PC-3 (cell line): ENCODE measurements at regions of chr1 and their contacts with region 1.

Region 1: DNA sequence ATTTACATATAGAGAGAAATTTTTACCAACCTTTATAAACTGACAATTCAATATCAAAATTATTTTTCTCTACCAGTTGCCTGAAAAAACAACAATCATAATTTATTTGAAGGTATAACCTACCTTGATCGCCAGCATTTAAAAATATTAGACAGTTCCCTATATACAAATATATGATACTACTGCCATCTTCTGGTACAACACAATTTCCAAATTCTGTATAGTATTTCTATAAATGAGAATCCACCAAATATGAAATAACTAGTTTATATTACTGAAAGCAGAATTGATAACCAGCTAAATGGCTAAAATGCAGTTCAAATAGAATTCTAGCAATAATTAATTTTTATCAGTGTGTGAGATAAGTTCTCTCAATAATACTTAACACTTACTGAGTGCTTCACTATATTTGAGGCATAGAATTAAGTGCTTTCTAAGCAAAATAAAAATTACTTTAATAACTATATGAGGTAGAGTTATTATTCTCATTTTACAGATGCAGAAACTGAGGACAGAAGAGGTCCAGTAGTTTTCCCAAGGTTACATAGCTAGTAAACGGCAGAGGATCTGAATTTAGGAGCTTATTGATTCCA is 75.6 kb downstream of the PIGK start:
- DNase-seq: peak; percentile 54
- ATAC-seq: peak; percentile 48; the same call in 1 of the 2 replicates
- H3K4me3 ChIP-seq: no peak overlapping the region
- H3K27ac ChIP-seq: no peak overlapping the region
- H3K4me1 ChIP-seq: no peaks in the 10 kb centered on the region
- H3K27me3 ChIP-seq: no peaks in the 10 kb centered on the region
- CTCF ChIP-seq: peak; percentile 73

Region 2: DNA sequence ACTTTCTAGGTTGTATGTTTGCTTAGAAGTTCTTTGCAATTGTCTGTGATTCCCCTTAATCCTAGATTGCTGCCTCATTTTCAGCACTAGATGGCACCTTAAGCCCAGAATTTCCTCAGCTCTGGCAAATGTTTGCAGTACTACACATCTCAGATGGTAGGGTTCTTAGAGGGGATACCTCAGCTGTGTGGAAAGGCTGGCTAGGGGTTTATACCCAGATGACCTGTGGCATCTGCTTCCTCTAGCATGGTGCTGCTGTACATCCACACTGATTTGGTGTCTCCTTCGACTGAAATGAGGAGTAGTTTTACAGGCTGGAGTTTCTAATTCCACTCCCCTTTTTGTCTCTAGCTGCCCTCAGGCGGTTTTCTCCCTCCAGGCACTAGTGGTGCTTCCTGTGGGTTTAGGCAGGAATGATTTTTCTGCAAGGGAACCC is 1234.9 kb before region 1 on chr1:
- CTCF ChIA-PET with region 1: no interaction called
- POLR2A ChIA-PET with region 1: no interaction called
- intact Hi-C with region 1: loop called (anchors 5 kb)
- DNase-seq: peak; percentile 69
- ATAC-seq: peak; percentile 79
- H3K4me3 ChIP-seq: no peak overlapping the region
- H3K27ac ChIP-seq: no peak overlapping the region
- H3K4me1 ChIP-seq: 0 out of 2 replicates have a peak, but pooled peaks cover 4% of the 10 kb centered on the region
- H3K27me3 ChIP-seq: peaks cover 36% of the 10 kb centered on the region
- CTCF ChIP-seq: peak; percentile 86

Region 3: GRCh38 chr1:76330991-76331603 is 812.5 kb before region 1 on chr1:
- CTCF ChIA-PET with region 1: no interaction called
- POLR2A ChIA-PET with region 1: no interaction called
- intact Hi-C with region 1: loop called (anchors 1 kb)
- DNase-seq: peak; percentile 78
- ATAC-seq: peak; percentile 78
- H3K4me3 ChIP-seq: no peak overlapping the region
- H3K27ac ChIP-seq: no peak overlapping the region
- H3K4me1 ChIP-seq: no peaks in the 10 kb centered on the region
- H3K27me3 ChIP-seq: no peaks in the 10 kb centered on the region
- CTCF ChIP-seq: peak; percentile 94

Region 4: DNA sequence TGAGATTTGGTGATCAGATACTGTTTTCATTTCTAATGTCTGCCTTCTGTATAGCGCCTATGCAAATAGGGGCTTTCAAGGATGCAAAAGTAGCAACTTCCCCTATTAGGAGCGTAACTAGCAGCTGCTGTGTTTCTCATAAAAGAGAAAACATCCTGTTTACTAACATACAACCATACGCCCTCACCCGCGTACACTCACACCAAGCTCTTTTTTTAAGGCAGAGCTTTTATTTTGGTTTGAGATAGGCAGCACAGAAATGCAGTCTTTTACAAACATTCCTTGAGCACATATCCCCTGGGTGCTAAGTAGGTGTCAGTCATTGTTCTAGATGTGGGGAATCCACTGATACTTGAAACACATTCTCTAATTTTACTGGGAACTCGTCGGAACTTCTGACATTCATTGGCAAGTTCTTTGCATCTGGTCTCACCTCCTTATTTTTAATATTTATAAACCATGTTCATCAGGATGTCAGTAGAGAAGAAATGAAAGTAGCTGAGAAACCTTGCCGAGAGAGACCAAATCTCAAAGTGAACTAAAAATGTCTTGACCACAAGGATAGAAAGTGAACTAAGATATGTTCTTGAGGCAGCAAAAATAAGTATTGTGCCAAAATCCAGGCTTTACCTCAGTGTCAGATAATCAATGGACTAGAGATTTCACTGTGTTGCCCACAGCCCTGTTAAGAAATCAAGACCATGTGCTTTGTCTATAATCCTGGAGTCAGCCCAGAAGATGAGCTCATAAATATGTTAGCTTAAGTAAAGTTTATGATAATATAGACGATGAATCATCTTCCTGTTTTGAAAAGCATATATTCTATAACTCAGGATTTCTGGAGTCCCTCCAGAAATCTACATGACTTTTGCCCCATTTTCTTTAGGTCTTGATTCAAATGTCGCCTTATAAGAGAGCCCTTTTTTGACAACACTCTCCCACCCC is 718.2 kb before region 1 on chr1:
- CTCF ChIA-PET with region 1: no interaction called
- POLR2A ChIA-PET with region 1: no interaction called
- intact Hi-C with region 1: no loop called
- DNase-seq: peak; percentile 56
- ATAC-seq: no peak
- H3K4me3 ChIP-seq: no peak overlapping the region
- H3K27ac ChIP-seq: no peak overlapping the region
- H3K4me1 ChIP-seq: no peaks in the 10 kb centered on the region
- H3K27me3 ChIP-seq: peaks cover 3% of the 10 kb centered on the region; the same call in 1 of the 2 replicates
- CTCF ChIP-seq: no peak

Region 5: DNA sequence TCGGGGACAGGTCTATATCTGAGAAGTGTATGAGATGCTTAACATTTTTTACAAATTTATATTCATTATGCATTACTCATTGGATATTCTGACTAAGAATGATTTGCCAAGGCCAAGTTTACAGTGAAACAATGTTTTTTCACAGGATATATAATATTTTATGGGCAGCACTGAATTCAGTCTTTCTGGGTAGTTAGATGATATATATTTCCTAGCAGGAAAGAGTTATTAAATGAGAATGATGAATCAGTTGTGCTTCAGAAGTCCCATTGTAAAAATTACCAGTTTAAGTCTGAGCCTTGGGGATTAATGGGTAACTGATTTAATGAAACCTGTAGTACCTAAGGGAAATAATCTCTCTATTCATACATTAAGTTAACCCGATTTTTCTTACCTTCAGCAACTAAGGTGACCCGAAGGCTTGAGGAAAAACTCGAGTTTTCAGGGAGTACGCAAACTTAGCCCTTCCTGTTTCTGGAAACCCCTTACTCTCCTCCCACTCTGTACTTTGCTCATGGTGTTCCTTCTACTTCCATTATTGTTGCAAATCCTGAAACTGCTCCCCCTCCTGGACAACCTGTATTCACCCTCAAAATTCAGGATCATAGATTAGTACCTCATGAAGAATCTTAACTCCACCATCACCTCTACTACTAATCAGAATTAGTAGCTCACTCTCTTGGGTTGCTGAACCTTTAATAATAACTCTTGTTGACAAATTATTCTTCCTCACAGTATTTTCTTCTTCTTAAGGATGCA is 273.2 kb after region 1 on chr1:
- CTCF ChIA-PET with region 1: no interaction called
- POLR2A ChIA-PET with region 1: no interaction called
- intact Hi-C with region 1: loop called (anchors 10 kb)
- DNase-seq: peak; percentile 68
- ATAC-seq: peak; percentile 56
- H3K4me3 ChIP-seq: no peak overlapping the region
- H3K27ac ChIP-seq: peak overlapping the region; percentile 87
- H3K4me1 ChIP-seq: peaks cover 42% of the 10 kb centered on the region
- H3K27me3 ChIP-seq: no peaks in the 10 kb centered on the region
- CTCF ChIP-seq: peak; percentile 80

Region 6: GRCh38 chr1:77683160-77684148 is 539.8 kb after region 1 on chr1:
- CTCF ChIA-PET with region 1: interaction called, 6 read pairs
- POLR2A ChIA-PET with region 1: no interaction called
- intact Hi-C with region 1: loop called (anchors 2 kb)
- DNase-seq: peak; percentile 94
- ATAC-seq: peak; percentile 81
- H3K4me3 ChIP-seq: peak overlapping the region; percentile 90
- H3K27ac ChIP-seq: peak overlapping the region; percentile 91
- H3K4me1 ChIP-seq: peaks cover 29% of the 10 kb centered on the region
- H3K27me3 ChIP-seq: no peaks in the 10 kb centered on the region
- CTCF ChIP-seq: peak; percentile 81